H1 (cell line): ENCODE measurements at regions of chr13 and their contacts with region 1.

Region 1: GRCh38 chr13:26445092-26445491 is 112.4 kb upstream of the WASF3 start:
- DNase-seq: no peak
- H3K4me3 ChIP-seq: no peak overlapping the region
- H3K27ac ChIP-seq: no peak overlapping the region
- H3K4me1 ChIP-seq: no peaks in the 10 kb centered on the region
- H3K27me3 ChIP-seq: no peaks in the 10 kb centered on the region
- CTCF ChIP-seq: peak in 2 of 3 experiments; percentile 19 to 47; a peak in 2 of 4 replicates
- EP300 ChIP-seq: no peak
- POLR2A ChIP-seq: no peak
- RAD21 ChIP-seq: peak; percentile 43 to 60

Region 2: GRCh38 chr13:26412263-26412662 is 32.8 kb before region 1 on chr13:
- CTCF ChIA-PET with region 1: interaction called, 11 read pairs
- POLR2A ChIA-PET with region 1: no interaction called
- DNase-seq: no peak
- H3K4me3 ChIP-seq: no peak overlapping the region
- H3K27ac ChIP-seq: no peak overlapping the region
- H3K4me1 ChIP-seq: no peaks in the 10 kb centered on the region; a peak in 1 of 7 replicates
- H3K27me3 ChIP-seq: no peaks in the 10 kb centered on the region
- CTCF ChIP-seq: no peak
- EP300 ChIP-seq: no peak
- POLR2A ChIP-seq: no peak
- RAD21 ChIP-seq: no peak